Activated CD4-positive, alpha-beta T cell treated with anti-CD3 and anti-CD28 coated beads, Interleukin-2, amount 10 ng/mL, durations not matched to agents 24 days and 14 days (primary cell): ENCODE measurements at regions of chr2 and their contacts with region 1.

Region 1: GRCh38 chr2:30711646-30712085 is 95.6 kb downstream of the CAPN13 start:
- DNase-seq: peak; percentile 96
- H3K4me3 Mint-ChIP-seq: no peak overlapping the region
- H3K27ac Mint-ChIP-seq: peak overlapping the region; percentile 67
- H3K4me1 Mint-ChIP-seq: peaks cover 15% of the 10 kb centered on the region
- H3K27me3 Mint-ChIP-seq: peaks cover 6% of the 10 kb centered on the region

Region 2: GRCh38 chr2:30165050-30165520 is 546.6 kb before region 1 on chr2:
- intact Hi-C with region 1: loop called (anchors 1 kb)
- DNase-seq: peak; percentile 91
- H3K4me3 Mint-ChIP-seq: no peak overlapping the region
- H3K27ac Mint-ChIP-seq: no peak overlapping the region
- H3K4me1 Mint-ChIP-seq: peaks cover 2% of the 10 kb centered on the region
- H3K27me3 Mint-ChIP-seq: peaks cover 2% of the 10 kb centered on the region

Region 3: GRCh38 chr2:30601375-30601774 is 110.3 kb before region 1 on chr2:
- intact Hi-C with region 1: no loop called
- DNase-seq: no peak
- H3K4me3 Mint-ChIP-seq: no peak overlapping the region
- H3K27ac Mint-ChIP-seq: no peak overlapping the region
- H3K4me1 Mint-ChIP-seq: no peaks in the 10 kb centered on the region
- H3K27me3 Mint-ChIP-seq: no peaks in the 10 kb centered on the region

Region 4: GRCh38 chr2:30862054-30862651 is 150.5 kb after region 1 on chr2:
- intact Hi-C with region 1: loop called (anchors 2 kb)
- DNase-seq: peak; percentile 76
- H3K4me3 Mint-ChIP-seq: no peak overlapping the region
- H3K27ac Mint-ChIP-seq: no peak overlapping the region
- H3K4me1 Mint-ChIP-seq: peaks cover 6% of the 10 kb centered on the region
- H3K27me3 Mint-ChIP-seq: peaks cover 5% of the 10 kb centered on the region

Region 5: DNA sequence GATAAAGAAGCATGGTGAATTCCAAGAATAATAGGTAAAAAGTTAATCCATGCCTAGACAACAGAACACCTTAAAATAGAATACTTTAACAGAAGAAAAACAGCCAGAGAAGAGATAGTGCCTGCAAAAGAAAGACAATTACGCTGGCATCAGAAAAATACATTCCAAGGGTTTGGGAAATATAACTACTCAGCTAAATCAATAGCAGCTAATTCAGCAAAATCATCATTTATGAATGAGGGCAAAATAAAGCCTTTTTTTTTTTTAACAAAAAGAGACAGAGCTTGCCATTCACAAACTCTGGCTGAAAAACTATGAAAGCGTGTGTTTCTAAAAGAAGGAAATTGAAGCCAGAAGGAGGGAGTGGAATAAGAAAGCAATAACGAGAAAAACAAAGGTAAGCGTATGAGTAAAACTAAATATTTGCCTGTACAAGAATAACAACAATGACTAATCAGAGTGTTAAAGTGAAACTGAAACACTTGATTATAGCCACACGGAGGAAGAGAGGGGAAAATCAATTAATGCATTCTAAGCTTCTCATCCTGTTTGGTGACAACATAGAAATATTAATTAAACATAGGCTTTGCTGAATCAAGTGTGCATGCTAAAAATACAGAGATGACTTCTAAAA is 612.5 kb after region 1 on chr2:
- intact Hi-C with region 1: loop called (anchors 2 kb)
- DNase-seq: no peak
- H3K4me3 Mint-ChIP-seq: peak overlapping the region; percentile 67
- H3K27ac Mint-ChIP-seq: peak overlapping the region; percentile 82
- H3K4me1 Mint-ChIP-seq: peaks cover 50% of the 10 kb centered on the region
- H3K27me3 Mint-ChIP-seq: peaks cover 13% of the 10 kb centered on the region

Region 6: GRCh38 chr2:31523871-31524492 is 812.3 kb after region 1 on chr2:
- intact Hi-C with region 1: loop called (anchors 1 kb)
- DNase-seq: peak; percentile 86
- H3K4me3 Mint-ChIP-seq: no peak overlapping the region
- H3K27ac Mint-ChIP-seq: no peak overlapping the region
- H3K4me1 Mint-ChIP-seq: no peaks in the 10 kb centered on the region
- H3K27me3 Mint-ChIP-seq: peaks cover 4% of the 10 kb centered on the region